Right ventricle myocardium inferior (tissue), 1 donor: ENCODE measurements at regions of chr5 and their contacts with region 1.

Region 1: GRCh38 chr5:54249210-54250028 is 61.0 kb downstream of the ARL15 start:
- DNase-seq: no peak
- ATAC-seq: no peak

Region 2: DNA sequence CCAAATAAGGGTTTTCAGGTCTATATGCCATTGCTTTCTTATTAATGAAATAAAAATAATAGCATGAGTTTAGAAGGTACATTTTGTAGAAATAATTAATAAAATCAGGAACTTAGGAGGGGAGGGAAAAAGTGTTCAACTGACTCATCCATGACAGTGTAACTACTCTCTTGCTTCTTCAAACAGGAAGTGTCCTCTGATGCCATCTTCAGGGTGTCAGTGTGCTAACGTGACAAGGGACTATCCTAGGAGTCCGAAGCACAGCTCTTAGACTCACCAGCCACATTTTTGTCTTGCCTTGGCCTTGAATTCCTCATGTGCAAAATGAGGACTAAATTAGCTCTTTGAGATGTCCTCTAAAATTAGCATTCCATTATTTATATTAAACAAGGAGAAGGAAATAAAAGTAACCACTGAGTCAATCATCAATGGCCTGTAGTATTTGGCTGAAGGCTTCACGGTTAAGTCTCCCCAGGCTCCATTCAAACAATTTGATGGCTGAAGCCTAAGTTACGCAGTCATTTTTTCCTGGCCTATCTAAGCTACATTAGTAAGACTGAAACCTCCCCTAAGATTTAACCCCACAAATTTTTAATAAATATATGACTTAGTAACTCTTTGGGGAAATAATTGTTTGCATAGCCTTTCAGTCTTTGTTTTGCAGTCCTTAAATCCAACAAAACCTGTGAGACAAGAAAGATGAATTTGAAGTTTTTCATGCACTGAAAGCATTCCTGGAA is 90.1 kb before region 1 on chr5:
- intact Hi-C with region 1: no loop called
- DNase-seq: no peak
- ATAC-seq: no peak

Region 3: GRCh38 chr5:54415896-54416601 is 166.6 kb after region 1 on chr5:
- intact Hi-C with region 1: loop called (anchors 5 kb)
- DNase-seq: no peak
- ATAC-seq: no peak

Region 4: GRCh38 chr5:54480296-54480695 is 230.9 kb after region 1 on chr5:
- intact Hi-C with region 1: loop called (anchors 5 kb)
- DNase-seq: no peak
- ATAC-seq: no peak